OCI-LY7 (cell line): ENCODE measurements at regions of chr17 and their contacts with region 1.

Region 1: DNA sequence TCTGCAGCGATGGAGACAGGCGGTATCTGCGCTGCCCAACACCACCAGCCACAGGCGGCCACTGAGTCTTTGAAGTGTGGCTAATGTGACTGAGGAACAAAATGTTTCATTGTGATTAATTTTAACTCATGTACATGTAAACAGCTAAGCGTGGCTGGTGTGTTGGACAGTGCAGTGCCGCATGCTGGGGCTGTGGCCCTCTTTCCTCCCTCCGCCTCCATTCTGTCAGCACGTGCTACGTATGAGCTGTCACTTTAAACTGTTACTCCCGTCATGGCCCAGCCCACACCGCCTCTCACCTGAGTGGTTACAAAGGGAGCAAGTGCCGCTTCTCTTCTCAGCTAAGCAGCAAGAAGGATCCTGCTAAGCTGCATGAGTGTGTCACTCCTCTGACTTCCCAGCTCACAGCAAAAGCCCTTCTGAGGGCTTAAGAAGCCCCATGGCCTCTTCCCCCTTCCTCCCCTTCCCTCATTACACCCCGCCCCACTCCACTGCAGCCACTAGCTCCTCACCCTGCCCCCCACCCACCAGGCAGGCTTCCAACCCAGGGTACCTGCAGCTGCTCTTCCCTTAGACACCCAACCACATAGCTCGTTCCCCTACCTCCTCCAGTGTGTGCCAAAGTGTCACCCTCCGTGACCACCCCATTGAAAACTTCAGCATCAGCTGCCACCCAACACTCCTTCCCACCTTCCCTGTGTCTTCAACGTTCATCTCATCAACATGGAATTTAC is 15.0 kb downstream of the HASPIN start:
- DNase-seq: peak; percentile 49
- H3K4me3 ChIP-seq: no peak overlapping the region
- H3K27ac ChIP-seq: no peak overlapping the region
- H3K4me1 ChIP-seq: peaks cover 11% of the 10 kb centered on the region
- CTCF ChIP-seq: no peak

Region 2: DNA sequence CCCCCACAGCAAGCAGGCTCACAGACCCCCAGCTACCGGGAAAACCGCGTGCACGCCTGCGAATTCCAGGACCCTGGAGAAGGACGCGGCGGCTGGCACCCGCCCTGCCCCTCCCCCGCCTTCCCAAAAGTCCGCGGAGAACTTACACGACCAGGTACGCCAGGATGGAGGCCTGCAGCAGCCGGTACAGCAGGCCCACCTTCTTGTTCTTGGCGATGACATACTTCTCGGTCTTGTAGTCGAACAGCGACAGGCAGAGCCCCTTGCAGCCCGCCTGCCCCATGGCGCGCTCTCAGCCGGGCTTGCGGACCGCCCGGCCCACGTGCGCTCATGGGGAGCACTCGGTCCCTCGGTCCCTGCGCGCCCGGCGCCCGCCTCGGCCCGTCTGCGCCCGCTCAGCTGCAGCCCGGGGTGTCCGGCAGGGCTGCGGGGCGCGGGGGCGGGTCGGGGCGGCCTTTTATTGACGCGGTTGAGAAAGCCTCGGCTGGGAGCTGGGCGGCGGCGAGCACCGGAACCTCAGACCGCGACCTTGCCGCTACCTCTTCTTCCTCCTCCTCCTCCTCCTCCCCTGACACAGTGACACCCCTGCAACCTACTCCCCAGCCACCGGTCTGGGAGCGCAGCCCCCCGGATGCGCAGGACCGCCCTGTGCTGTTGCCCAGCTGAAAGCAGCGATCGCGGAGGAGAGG is 42.9 kb before region 1 on chr17 and contains the start of gene P2RX5:
- CTCF ChIA-PET with region 1: no interaction called
- POLR2A ChIA-PET with region 1: no interaction called
- intact Hi-C with region 1: no loop called
- DNase-seq: peak; percentile 87
- H3K4me3 ChIP-seq: peak within 1 kb of the TSS; percentile 79
- H3K27ac ChIP-seq: peak within 1 kb of the TSS; percentile 87
- H3K4me1 ChIP-seq: peaks cover 38% of the 10 kb centered on the region
- CTCF ChIP-seq: no peak
- total RNA-seq, gene P2RX5: 143 and 150 TPM in 2 replicates

Region 3: DNA sequence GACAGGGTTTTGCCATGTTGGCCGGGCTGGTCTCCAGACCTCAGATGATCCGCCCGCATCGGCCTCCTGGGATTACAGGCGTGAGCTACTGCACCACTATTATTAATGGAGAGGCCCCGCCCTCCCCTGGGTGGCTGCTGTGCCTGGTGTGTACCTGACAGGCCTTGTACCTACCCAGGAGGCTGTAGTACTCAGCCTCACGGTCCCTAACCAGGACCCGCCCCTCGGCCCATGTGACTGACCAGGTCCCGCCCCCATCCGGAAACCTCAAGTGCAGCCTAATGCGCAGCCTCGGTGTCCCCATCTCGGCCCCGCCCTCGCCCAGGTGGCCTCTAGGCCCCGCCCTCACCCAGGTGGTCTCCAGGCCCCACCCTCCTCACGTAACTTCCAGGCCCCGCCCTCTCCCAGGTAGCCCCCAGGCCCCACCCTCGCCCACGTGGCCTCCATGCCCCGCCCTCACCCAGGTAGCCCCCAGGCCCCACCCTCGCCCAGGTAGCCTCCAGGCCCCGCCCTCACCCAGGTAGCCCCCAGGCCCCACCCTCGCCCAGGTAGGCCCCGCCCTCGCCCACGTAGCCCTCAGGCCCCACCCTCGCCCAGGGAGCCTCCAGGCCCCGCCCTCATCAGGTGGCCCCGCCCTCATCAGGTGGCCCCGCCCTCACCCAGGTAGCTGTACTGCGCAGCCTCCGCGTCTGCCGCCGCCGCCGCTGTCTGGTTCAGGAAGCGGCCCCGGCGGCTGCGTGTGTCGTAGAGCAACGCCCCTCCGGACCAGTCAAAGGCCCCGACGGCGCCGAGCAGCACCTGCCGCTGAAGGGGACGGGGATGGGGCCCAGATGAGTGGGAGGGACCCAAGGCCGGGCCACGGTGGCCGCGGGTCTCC is 16.0 kb after region 1 on chr17:
- CTCF ChIA-PET with region 1: no interaction called
- POLR2A ChIA-PET with region 1: no interaction called
- intact Hi-C with region 1: no loop called
- DNase-seq: no peak
- H3K4me3 ChIP-seq: no peak overlapping the region
- H3K27ac ChIP-seq: no peak overlapping the region
- H3K4me1 ChIP-seq: no peaks in the 10 kb centered on the region
- CTCF ChIP-seq: no peak

Region 4: GRCh38 chr17:3827124-3827773 is 88.5 kb after region 1 on chr17:
- CTCF ChIA-PET with region 1: interaction called, 16 read pairs
- POLR2A ChIA-PET with region 1: interaction called, 3 read pairs
- intact Hi-C with region 1: loop called (anchors 1 kb)
- DNase-seq: peak; percentile 73
- H3K4me3 ChIP-seq: no peak overlapping the region
- H3K27ac ChIP-seq: no peak overlapping the region
- H3K4me1 ChIP-seq: no peaks in the 10 kb centered on the region
- CTCF ChIP-seq: peak; percentile 98

Region 5: GRCh38 chr17:3907483-3908216 is 168.9 kb after region 1 on chr17:
- CTCF ChIA-PET with region 1: interaction called, 4 read pairs
- POLR2A ChIA-PET with region 1: no interaction called
- intact Hi-C with region 1: loop called (anchors 2 kb)
- DNase-seq: no peak
- H3K4me3 ChIP-seq: no peak overlapping the region
- H3K27ac ChIP-seq: no peak overlapping the region
- H3K4me1 ChIP-seq: peaks cover 30% of the 10 kb centered on the region
- CTCF ChIP-seq: peak; percentile 59

Region 6: DNA sequence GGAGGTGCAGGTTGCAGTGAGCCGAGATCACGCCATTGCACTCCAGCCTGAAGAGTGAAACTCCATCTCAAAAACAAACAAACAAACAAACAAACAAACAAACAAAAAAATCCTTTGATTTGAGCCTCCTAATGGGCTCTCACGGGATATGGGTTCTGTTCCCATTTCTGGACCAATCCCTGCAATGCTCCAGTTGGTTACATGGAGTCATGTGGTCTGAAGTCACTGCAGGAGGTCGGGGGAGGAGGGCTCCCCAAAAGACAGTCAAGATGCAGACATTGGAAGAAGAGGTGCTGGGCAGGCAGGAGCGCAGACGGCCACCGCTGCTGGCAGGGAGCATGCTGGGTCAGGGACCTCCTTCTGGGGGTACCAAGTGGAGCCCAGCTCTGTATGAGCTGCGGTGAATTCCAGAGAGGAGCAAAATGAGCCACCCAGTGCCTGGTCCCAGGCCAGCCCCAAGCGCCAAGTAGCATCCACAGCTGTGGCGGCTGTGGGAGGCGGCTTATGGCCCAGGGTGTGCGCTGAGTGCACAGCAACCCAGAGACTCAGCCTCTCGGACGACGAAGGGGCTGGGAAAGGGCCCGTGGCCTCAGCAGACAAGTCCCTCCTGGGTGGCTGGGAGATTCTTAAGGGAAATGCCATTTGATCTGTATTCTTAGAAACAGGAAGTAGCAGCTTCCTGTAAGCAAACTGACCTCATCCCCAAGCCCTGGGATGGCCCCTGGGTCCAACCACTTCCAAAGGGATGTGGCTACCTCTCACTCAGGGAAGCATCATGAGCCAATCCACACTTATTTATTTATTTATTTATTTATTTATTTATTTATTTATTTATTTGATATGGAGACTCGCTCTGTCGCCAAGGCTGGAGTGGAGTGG is 245.1 kb after region 1 on chr17:
- CTCF ChIA-PET with region 1: no interaction called
- POLR2A ChIA-PET with region 1: no interaction called
- intact Hi-C with region 1: no loop called
- DNase-seq: no peak
- H3K4me3 ChIP-seq: no peak overlapping the region
- H3K27ac ChIP-seq: no peak overlapping the region
- H3K4me1 ChIP-seq: peaks cover 30% of the 10 kb centered on the region
- CTCF ChIP-seq: no peak